Activated CD4-positive, alpha-beta memory T cell treated with anti-CD3 and anti-CD28 coated beads, Interleukin-2, amount 10 ng/mL, durations not matched to agents 7 days and 5 days (primary cell): ENCODE measurements at regions of chr6 and their contacts with region 1.

Region 1: DNA sequence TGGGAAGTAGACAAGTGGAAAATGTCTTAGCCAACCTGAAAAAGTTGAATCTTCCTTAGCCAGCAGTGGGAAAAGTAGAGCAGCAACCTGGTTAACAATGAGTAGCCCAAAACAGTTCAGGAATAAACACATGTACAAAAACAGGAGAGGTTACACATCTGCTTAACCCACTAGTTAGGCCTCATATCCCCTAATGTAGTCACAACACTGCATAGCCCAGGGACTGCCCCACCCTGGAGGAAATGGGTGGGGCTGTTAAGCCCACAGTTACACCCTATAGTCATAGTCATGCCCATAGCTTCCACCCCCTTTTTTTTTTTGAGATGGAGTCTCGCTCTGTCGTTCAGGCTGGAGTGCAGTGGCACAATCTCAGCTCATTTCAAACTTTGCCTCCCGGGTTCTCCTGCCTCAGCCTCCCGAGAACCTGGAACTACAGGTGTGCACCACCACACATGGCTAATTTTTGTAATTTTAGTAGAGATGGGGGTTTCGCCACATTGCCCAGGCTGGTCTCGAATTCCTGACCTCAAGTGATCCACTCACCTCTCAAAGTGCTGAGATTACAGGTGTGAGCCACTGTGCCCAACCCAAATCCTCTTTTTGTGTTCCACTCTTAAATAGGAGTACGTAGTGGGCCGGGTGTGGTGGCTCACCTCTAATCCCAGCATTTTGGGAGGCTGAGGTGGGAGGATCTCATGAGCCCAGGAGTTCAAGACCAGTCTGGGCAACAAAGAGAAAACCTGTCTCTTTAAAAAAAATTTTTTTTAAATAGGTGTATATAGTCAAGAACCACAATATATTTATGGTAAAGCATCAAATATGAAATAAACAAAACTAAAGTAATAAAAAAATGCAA is 24.5 kb downstream of the ILRUN start:
- DNase-seq: peak; percentile 84
- H3K4me3 Mint-ChIP-seq: peak overlapping the region; percentile 75
- H3K27ac Mint-ChIP-seq: peak overlapping the region; percentile 98
- H3K4me1 Mint-ChIP-seq: peaks cover 62% of the 10 kb centered on the region
- H3K27me3 Mint-ChIP-seq: no peaks in the 10 kb centered on the region

Region 2: DNA sequence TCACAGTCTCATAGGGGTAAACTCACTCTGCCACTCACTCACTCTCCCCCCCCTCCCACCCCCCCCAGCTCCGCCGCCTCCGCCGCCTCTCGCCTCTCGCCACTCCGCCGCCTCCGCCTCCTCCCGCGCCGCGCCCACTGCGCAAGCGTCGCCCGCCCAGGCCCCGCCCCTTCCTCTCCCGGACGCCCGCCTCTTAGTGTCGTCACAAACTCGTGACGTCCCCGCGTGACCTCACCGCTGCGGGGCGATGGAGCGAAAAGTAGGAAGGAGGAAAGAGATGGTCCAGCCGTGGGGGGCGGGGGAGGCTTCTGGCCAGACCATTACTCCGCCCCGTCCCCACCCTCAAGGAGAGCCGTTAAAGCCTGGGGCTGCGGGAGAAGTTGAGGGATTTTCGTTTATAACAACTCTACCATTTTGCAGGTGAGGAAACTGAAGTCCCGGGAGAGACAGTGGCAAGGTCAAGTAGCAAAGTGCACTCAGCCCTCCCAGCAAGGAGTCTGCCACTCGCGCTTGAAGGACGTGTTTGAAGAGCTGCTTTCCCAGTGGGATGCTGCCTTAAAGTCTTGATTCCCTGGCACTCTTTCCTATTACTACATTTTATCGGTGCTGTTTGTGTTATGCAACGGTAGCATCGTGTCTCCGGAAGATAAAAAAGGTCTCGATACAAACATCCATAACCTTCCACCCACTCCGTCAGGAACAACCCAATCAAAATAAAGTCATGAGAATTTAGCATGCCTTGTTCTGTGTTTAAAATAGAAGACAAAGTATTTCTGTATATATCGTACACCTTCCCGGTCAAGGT is 24.9 kb after region 1 on chr6 and contains the start of gene ILRUN:
- CTCF ChIA-PET with region 1: interaction called, 11 read pairs
- POLR2A ChIA-PET with region 1: interaction called, 66 read pairs
- DNase-seq: peak; percentile 97
- H3K4me3 Mint-ChIP-seq: peak within 1 kb of the TSS; percentile 88
- H3K27ac Mint-ChIP-seq: peak within 1 kb of the TSS; percentile 85
- H3K4me1 Mint-ChIP-seq: peaks cover 44% of the 10 kb centered on the region
- H3K27me3 Mint-ChIP-seq: no peaks in the 10 kb centered on the region
- total RNA-seq, gene ILRUN: 85.3 to 86.6 TPM

Region 3: GRCh38 chr6:34757687-34758274 is 85.8 kb after region 1 on chr6:
- CTCF ChIA-PET with region 1: interaction called, 10 read pairs
- POLR2A ChIA-PET with region 1: interaction called, 20 read pairs
- DNase-seq: no peak
- H3K4me3 Mint-ChIP-seq: no peak overlapping the region
- H3K27ac Mint-ChIP-seq: no peak overlapping the region
- H3K4me1 Mint-ChIP-seq: peaks cover 13% of the 10 kb centered on the region
- H3K27me3 Mint-ChIP-seq: no peaks in the 10 kb centered on the region

Region 4: GRCh38 chr6:34964564-34964963 is 292.5 kb after region 1 on chr6:
- CTCF ChIA-PET with region 1: no interaction called
- POLR2A ChIA-PET with region 1: no interaction called
- DNase-seq: no peak
- H3K4me3 Mint-ChIP-seq: no peak overlapping the region
- H3K27ac Mint-ChIP-seq: no peak overlapping the region
- H3K4me1 Mint-ChIP-seq: peaks cover 2% of the 10 kb centered on the region
- H3K27me3 Mint-ChIP-seq: no peaks in the 10 kb centered on the region